Thyroid gland (tissue), 4 donors: ENCODE measurements at regions of chr18 and their contacts with region 1.

Region 1: DNA sequence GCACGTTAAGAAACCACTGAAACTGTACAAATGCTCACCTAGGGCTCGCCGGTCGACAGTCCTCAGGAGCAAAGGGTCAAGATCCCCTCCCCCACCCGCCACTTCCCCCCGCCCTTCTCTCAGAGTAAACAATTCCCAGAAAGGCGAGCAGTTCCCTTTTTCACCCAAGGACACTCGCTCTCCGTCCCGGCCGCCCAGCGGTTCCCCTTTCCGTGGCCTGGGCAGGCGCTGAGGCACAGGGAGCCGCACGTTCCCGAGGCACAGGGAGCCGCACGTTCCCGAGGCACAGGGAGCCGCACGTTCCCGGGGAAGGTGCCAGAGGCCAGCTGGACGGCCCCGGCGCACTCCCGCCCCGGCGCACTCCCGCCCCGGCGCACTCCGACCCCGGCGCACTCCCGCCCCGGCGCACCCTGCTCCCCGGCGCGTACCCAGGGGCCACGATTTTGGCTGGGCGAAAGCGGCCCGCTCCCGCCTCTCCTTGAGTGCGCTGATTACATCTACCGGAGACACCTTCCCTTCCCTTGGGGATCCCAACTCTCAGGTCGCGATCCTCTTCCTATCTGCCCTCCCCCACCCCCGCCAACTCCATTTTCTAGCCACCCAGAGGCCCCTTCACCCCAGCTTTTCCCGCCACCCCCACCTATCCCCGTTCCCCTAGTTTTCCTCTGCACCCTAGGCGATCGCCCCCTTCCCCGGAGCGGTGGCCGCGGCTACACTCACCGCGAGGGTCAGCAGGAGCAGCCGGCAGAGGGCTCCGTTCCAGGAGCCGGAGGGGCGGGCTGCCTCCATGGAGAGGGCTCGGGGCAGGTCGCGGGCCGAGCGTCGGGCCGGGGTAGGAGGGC is 817 bp downstream of the DSC2 start:
- DNase-seq: peak; percentile 71 to 80
- H3K4me3 ChIP-seq: peak overlapping the region; percentile 10 to 56 (median 48)
- H3K27ac ChIP-seq: peak overlapping the region; percentile 45 to 73 (median 66)
- H3K4me1 ChIP-seq: peaks cover 0 to 7% of the 10 kb centered on the region in 2 donors
- H3K27me3 ChIP-seq: no peaks in the 10 kb centered on the region
- CTCF ChIP-seq: no peak
- POLR2A ChIP-seq: peak in 1 of 2 donors; percentile 44

Region 2: DNA sequence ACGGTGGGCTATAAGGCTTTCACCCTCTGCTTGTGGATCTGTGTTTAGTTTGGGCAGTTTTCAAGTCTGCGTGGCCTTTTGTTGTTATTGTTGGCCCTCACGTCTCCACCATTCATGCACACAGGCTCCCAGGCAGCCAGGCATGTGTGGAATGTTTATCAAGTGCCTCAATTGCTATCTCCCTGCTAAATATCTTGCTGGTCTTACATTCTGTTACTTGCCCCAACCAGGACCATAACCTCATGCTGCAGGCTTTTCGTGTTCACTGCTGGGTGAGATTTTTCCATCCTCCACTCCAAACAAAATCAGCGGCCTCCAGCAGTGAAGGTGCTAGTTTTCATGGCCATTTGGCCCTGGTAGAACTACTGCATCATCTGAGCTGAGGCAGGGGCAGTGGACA is 124.3 kb after region 1 on chr18:
- intact Hi-C with region 1: loop called (anchors 10 kb)
- DNase-seq: peak; percentile 71 to 83
- H3K4me3 ChIP-seq: no peak overlapping the region
- H3K27ac ChIP-seq: peak overlapping the region; percentile 33 to 82 (median 57)
- H3K4me1 ChIP-seq: peaks cover 19 to 43% of the 10 kb centered on the region in 2 donors
- H3K27me3 ChIP-seq: no peaks in the 10 kb centered on the region
- CTCF ChIP-seq: no peak
- POLR2A ChIP-seq: no peak